Sciatic nerve (tissue), 2 donors: ENCODE measurements at regions of chr22 and their contacts with region 1.

Region 1: GRCh38 chr22:38167988-38168431 is 13.6 kb downstream of the PLA2G6 start:
- DNase-seq: no peak
- ATAC-seq: no peak

Region 2: GRCh38 chr22:37933711-37934376 is 234.2 kb before region 1 on chr22:
- intact Hi-C with region 1: no loop called
- DNase-seq: peak; percentile 89
- ATAC-seq: peak; percentile 94

Region 3: DNA sequence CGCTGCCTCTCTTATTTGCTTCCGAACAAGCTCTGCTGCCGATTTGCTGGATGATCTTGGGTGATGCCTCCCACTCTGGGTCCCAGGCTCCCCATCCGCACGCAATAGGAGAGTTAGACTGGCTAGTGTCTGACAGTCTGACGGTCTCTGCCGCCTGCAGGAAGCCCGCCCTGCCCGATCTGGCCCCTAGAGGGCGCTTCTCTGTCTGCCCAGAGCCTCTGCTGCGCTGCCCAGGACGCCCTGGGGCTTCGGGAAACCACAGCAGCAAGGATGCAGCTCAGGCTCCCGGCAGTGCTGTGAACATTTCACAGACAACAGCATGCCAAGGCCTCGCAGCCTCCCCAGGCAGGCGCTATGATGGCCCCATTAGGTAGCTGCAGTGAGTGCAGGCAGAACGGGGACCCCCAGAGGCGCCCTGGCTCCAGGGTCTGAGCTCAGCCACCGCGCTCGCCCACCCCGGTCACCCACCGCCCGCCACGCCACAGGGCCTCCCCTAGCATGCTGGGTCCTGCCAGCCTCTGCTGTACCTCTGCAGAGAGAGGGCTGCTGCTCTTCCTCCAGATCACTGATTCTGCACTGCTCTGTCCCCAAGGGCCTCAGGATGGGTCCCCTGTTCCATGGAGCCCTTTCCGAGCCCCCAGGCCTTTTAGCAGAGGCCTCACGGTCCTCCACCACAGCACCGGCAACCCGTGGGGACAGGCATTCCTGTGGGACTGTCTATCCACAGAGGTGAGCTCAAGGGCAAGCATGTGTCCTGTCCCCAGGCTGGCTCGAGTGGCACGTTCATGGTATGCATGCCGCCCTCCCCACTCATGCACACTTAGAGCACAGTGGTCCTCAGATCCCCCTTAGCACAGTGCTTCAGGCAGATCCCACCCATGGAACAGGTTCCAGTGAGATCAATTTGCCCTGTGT is 53.3 kb before region 1 on chr22:
- intact Hi-C with region 1: loop called (anchors 10 kb)
- DNase-seq: peak; percentile 93
- ATAC-seq: peak; percentile 92